ENCODE measurements at regions of chr20 and their contacts with region 1.

Region 1: GRCh38 chr20:37693635-37694626 is at the start of gene CTNNBL1:
- DNase-seq: peak; percentile 99
- ATAC-seq: peak; percentile 98
- H3K4me3 Mint-ChIP-seq: peak within 1 kb of the TSS; percentile 100
- H3K27ac Mint-ChIP-seq: peak within 1 kb of the TSS; percentile 96
- H3K4me1 Mint-ChIP-seq: peaks cover 31% of the 10 kb centered on the region
- H3K27me3 Mint-ChIP-seq: peaks cover 14% of the 10 kb centered on the region
- total RNA-seq, gene CTNNBL1: 72.6 to 93.4 TPM

Region 2: GRCh38 chr20:37745553-37745952 is 51.6 kb after region 1 on chr20:
- CTCF ChIA-PET with region 1: no interaction called
- POLR2A ChIA-PET with region 1: no interaction called
- intact Hi-C with region 1: loop called in 1 of 2 experiments (anchors 1 kb)
- DNase-seq: peak; percentile 80
- ATAC-seq: peak; percentile 97
- H3K4me3 Mint-ChIP-seq: peak overlapping the region; percentile 36
- H3K27ac Mint-ChIP-seq: peak overlapping the region; percentile 95
- H3K4me1 Mint-ChIP-seq: peaks cover 34% of the 10 kb centered on the region
- H3K27me3 Mint-ChIP-seq: no peaks in the 10 kb centered on the region

Region 3: DNA sequence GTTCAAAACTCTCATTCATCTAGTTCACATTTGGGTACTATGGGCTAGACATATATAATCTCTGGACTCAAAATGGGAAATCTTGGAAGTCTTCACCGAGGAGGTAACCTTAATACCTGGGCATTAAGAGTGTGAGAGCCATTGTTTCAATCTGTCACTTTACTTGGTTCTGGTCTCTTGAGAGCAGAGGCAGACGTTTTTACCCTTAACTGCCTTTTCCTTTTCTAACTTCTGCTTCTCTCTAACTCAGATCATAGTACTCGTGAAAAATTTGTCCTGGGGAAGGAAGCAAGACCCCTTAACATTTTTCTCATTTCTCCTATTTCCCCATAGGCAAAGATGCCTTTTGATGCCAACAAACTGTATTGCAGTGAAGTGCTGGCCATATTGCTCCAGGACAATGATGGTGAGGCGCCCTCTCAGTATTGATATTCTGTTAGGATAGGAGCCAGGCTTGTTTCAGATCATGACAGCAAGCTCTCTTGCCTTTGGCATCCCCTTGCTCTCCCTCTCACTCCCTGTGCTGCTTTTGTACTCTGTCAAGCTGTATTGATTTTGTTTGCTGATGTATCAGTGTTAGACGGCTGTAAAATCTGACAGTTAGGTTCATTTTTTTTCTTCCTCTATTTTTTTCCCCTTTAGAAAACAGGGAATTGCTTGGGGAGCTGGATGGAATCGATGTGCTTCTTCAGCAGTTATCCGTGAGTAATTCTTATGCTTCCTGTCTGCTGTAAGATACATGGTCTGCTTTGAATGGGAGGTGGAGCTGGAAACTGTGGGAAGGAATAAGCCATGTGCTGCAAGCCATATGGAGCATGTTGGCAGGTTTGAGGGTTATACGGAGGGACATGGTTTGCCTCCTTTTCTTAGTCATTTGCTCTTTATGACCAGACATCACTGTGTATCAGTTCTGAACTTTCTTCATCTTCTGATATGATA is 83.3 kb after region 1 on chr20:
- CTCF ChIA-PET with region 1: no interaction called
- POLR2A ChIA-PET with region 1: no interaction called
- intact Hi-C with region 1: no loop called
- DNase-seq: no peak
- ATAC-seq: no peak
- H3K4me3 Mint-ChIP-seq: no peak overlapping the region
- H3K27ac Mint-ChIP-seq: no peak overlapping the region
- H3K4me1 Mint-ChIP-seq: no peaks in the 10 kb centered on the region
- H3K27me3 Mint-ChIP-seq: no peaks in the 10 kb centered on the region

Measured in activated CD4-positive, alpha-beta T cell treated with anti-CD3 and anti-CD28 coated beads for 36 hours (primary cell).